CD8-positive, alpha-beta memory T cell (primary cell): ENCODE measurements at regions of chr19 and their contacts with region 1.

Region 1: DNA sequence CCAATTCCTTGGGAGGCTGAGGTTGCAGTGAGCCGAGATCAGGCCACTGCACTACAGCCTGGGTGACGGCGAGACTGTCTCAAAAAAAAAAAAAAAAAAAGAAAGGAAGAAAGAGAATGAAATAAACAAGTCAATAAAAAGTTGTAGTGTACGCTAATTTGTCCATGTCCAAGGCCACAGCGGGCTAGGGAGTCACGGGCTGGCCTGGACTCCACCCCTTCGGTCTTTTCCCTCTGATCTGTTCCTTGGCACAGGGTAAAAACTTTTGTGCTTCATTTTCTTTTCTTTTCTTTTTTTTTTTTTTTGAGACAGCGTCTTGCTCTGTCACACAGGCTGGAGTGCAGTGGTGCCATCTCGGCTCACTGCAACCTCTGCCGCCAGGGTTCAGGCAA is 19.4 kb upstream of the MKNK2 start:
- DNase-seq: no peak
- H3K4me3 ChIP-seq: no peak overlapping the region
- H3K4me3 Mint-ChIP-seq: no peak overlapping the region
- H3K27ac ChIP-seq: no peak overlapping the region
- H3K27ac Mint-ChIP-seq: peak overlapping the region in 3 of 8 donors; percentile 15 to 93 (median 88)
- H3K4me1 ChIP-seq: peaks cover 17% of the 10 kb centered on the region
- H3K4me1 Mint-ChIP-seq: peaks cover 18 to 23% (median 18%) of the 10 kb centered on the region in 3 donors
- H3K27me3 ChIP-seq: no peaks in the 10 kb centered on the region
- H3K27me3 Mint-ChIP-seq: no peaks in the 10 kb centered on the region

Region 2: GRCh38 chr19:2018752-2019151 is 51.7 kb before region 1 on chr19:
- CTCF ChIA-PET with region 1: interaction called, 19 read pairs
- POLR2A ChIA-PET with region 1: interaction called, 3 read pairs
- DNase-seq: no peak
- H3K4me3 ChIP-seq: no peak overlapping the region
- H3K4me3 Mint-ChIP-seq: no peak overlapping the region
- H3K27ac ChIP-seq: no peak overlapping the region
- H3K27ac Mint-ChIP-seq: no peak overlapping the region
- H3K4me1 ChIP-seq: peaks cover 6% of the 10 kb centered on the region
- H3K4me1 Mint-ChIP-seq: peaks cover 4 to 12% (median 6%) of the 10 kb centered on the region in 3 donors
- H3K27me3 ChIP-seq: no peaks in the 10 kb centered on the region
- H3K27me3 Mint-ChIP-seq: no peaks in the 10 kb centered on the region

Region 3: GRCh38 chr19:2033115-2033824 is 37.2 kb before region 1 on chr19:
- CTCF ChIA-PET with region 1: no interaction called
- POLR2A ChIA-PET with region 1: no interaction called
- DNase-seq: no peak
- H3K4me3 ChIP-seq: no peak overlapping the region
- H3K4me3 Mint-ChIP-seq: peak overlapping the region in 3 of 7 donors; percentile 3 to 51 (median 32)
- H3K27ac ChIP-seq: no peak overlapping the region
- H3K27ac Mint-ChIP-seq: peak overlapping the region in 3 of 8 donors; percentile 45 to 97 (median 84)
- H3K4me1 ChIP-seq: peaks cover 28% of the 10 kb centered on the region
- H3K4me1 Mint-ChIP-seq: peaks cover 18 to 24% (median 22%) of the 10 kb centered on the region in 3 donors
- H3K27me3 ChIP-seq: no peaks in the 10 kb centered on the region
- H3K27me3 Mint-ChIP-seq: no peaks in the 10 kb centered on the region

Region 4: GRCh38 chr19:2084993-2085720 is 14.7 kb after region 1 on chr19:
- CTCF ChIA-PET with region 1: interaction called, 49 read pairs
- POLR2A ChIA-PET with region 1: interaction called, 5 read pairs
- DNase-seq: peak; percentile 87 to 98 (median 96)
- H3K4me3 ChIP-seq: peak overlapping the region; percentile 83
- H3K4me3 Mint-ChIP-seq: peak overlapping the region; percentile 88 to 99 (median 97)
- H3K27ac ChIP-seq: peak overlapping the region; percentile 99
- H3K27ac Mint-ChIP-seq: peak overlapping the region; percentile 94 to 100 (median 98)
- H3K4me1 ChIP-seq: peaks cover 77% of the 10 kb centered on the region
- H3K4me1 Mint-ChIP-seq: peaks cover 70 to 78% (median 75%) of the 10 kb centered on the region in 3 donors
- H3K27me3 ChIP-seq: no peaks in the 10 kb centered on the region
- H3K27me3 Mint-ChIP-seq: peaks cover 0 to 7% of the 10 kb centered on the region in 2 donors

Region 5: GRCh38 chr19:2096480-2097329 is 26.3 kb after region 1 on chr19 and contains the start of gene IZUMO4:
- CTCF ChIA-PET with region 1: interaction called, 40 read pairs
- POLR2A ChIA-PET with region 1: interaction called, 5 read pairs
- DNase-seq: peak; percentile 99 to 100 (median 100)
- H3K4me3 ChIP-seq: peak within 1 kb of the TSS; percentile 87
- H3K4me3 Mint-ChIP-seq: peak within 1 kb of the TSS; percentile 94 to 100 (median 96)
- H3K27ac ChIP-seq: peak within 1 kb of the TSS; percentile 85
- H3K27ac Mint-ChIP-seq: peak within 1 kb of the TSS; percentile 91 to 98 (median 96)
- H3K4me1 ChIP-seq: peaks cover 31% of the 10 kb centered on the region
- H3K4me1 Mint-ChIP-seq: peaks cover 19 to 42% (median 24%) of the 10 kb centered on the region in 3 donors
- H3K27me3 ChIP-seq: no peaks in the 10 kb centered on the region
- H3K27me3 Mint-ChIP-seq: peaks cover 0 to 4% of the 10 kb centered on the region in 2 donors
- total RNA-seq, gene IZUMO4: 8.9 to 9.7 TPM

Region 6: DNA sequence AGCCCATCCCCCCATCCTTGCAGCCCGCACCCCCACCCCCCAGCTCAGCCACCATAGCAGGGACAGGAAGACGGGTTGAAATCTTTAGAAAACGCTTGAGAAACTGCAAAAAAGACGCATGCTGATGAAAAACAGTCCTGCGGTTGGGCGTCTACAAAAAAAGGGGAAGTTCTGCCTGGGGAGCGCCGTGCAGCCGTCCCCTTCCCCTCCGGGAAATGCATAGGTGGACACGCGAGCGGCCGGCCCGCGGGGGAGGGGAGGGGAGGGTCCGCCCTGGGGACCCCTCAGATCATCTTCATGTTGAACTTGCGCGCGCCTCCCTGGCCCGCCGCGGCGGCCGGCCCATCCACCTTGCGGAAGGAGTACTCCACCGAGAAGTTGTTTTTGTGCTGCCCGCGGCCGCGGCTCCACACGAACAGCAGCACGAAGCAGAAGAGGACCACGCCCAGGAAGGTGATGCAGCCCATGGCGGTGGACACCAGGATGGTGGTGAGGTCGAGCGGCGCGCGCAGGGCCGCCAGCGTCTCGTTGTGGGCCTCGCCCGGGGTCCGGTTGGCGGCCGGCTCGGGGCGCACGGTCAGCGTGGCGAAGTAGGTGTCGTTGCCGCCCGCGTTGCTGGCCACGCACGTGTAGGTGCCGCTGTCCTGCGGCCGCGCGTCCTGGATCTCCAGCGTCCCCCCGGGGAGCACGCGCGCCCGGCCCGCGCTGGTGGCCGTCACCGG is 219.4 kb after region 1 on chr19:
- CTCF ChIA-PET with region 1: no interaction called
- POLR2A ChIA-PET with region 1: no interaction called
- DNase-seq: peak in 3 of 5 donors; percentile 59 to 79 (median 68)
- H3K4me3 ChIP-seq: peak overlapping the region; percentile 81
- H3K4me3 Mint-ChIP-seq: peak overlapping the region; percentile 86 to 95 (median 89)
- H3K27ac ChIP-seq: peak overlapping the region; percentile 36
- H3K27ac Mint-ChIP-seq: peak overlapping the region in 6 of 8 donors; percentile 58 to 83 (median 73)
- H3K4me1 ChIP-seq: peaks cover 18% of the 10 kb centered on the region
- H3K4me1 Mint-ChIP-seq: peaks cover 16 to 41% (median 21%) of the 10 kb centered on the region in 3 donors
- H3K27me3 ChIP-seq: no peaks in the 10 kb centered on the region
- H3K27me3 Mint-ChIP-seq: peaks cover 0 to 12% of the 10 kb centered on the region in 2 donors

Region 7: DNA sequence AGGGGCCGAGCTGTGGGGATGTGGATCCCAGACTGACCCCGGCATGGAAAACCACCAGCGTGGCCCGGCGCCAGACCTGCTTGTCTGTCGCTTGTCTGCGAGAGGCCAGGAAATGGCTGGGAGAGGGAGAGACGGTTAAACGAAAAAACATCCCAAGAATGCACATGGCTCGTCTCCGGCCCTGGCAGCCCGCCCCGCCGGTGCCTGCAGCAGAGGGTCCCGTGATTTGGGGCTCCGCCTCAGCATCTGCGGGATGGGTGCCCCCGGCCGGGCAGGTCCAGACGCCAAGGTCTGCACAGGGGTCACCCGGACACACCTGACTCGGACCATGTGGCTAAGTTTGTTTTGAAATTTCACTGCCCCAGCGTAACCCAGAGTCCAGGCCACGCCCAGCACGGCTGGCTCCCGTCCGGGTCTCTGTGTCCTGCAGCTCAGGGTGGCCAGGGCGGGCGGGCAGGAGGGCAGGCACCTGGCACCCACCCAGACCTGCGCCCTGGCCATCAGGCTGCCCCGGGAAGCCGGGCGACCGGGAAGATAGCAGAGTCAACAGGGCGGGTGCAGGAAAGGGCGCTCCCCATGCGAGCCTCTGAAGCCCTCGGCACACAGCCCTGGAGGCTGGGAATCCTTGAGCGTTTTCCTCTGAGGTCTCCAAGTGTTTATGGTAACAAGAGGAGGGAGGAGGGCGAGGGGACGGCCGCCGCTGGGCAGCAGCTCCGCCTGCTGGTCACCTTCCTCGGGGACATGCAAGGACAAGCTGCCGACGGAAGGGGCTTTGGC is 508.7 kb after region 1 on chr19:
- CTCF ChIA-PET with region 1: no interaction called
- POLR2A ChIA-PET with region 1: no interaction called
- DNase-seq: peak; percentile 40 to 79 (median 52)
- H3K4me3 ChIP-seq: peak overlapping the region; percentile 43
- H3K4me3 Mint-ChIP-seq: peak overlapping the region in 3 of 7 donors; percentile 34 to 39 (median 36)
- H3K27ac ChIP-seq: no peak overlapping the region
- H3K27ac Mint-ChIP-seq: no peak overlapping the region
- H3K4me1 ChIP-seq: peaks cover 12% of the 10 kb centered on the region
- H3K4me1 Mint-ChIP-seq: peaks cover 0 to 10% (median 0%) of the 10 kb centered on the region in 3 donors
- H3K27me3 ChIP-seq: peaks cover 5% of the 10 kb centered on the region
- H3K27me3 Mint-ChIP-seq: peaks cover 6 to 9% of the 10 kb centered on the region in 2 donors